Pancreas (tissue), 10 donors: ENCODE measurements at regions of chr2 and their contacts with region 1.

Region 1: GRCh38 chr2:205776139-205776538 is 93.8 kb downstream of the NRP2 start:
- DNase-seq: peak; percentile 65 to 88 (median 80)
- ATAC-seq: peak; percentile 85 to 99 (median 94)
- H3K4me3 ChIP-seq: no peak overlapping the region
- H3K27ac ChIP-seq: no peak overlapping the region
- H3K4me1 ChIP-seq: no peaks in the 10 kb centered on the region
- H3K27me3 ChIP-seq: no peaks in the 10 kb centered on the region
- CTCF ChIP-seq: peak; percentile 77 to 79 (median 78)

Region 2: GRCh38 chr2:205814039-205814364 is 37.9 kb after region 1 on chr2:
- intact Hi-C with region 1: loop called in 1 of 3 experiments (anchors 5 kb)
- DNase-seq: no peak
- ATAC-seq: no peak
- H3K4me3 ChIP-seq: no peak overlapping the region
- H3K27ac ChIP-seq: no peak overlapping the region
- H3K4me1 ChIP-seq: no peaks in the 10 kb centered on the region
- H3K27me3 ChIP-seq: no peaks in the 10 kb centered on the region
- CTCF ChIP-seq: no peak

Region 3: GRCh38 chr2:205868773-205869333 is 92.7 kb after region 1 on chr2:
- intact Hi-C with region 1: no loop called
- DNase-seq: no peak
- ATAC-seq: peak in 2 of 4 donors; percentile 41 to 70
- H3K4me3 ChIP-seq: no peak overlapping the region
- H3K27ac ChIP-seq: no peak overlapping the region
- H3K4me1 ChIP-seq: no peaks in the 10 kb centered on the region
- H3K27me3 ChIP-seq: no peaks in the 10 kb centered on the region
- CTCF ChIP-seq: no peak

Region 4: GRCh38 chr2:205885492-205886099 is 109.5 kb after region 1 on chr2:
- intact Hi-C with region 1: loop called (anchors 5 to 10 kb)
- DNase-seq: peak; percentile 76 to 99 (median 90)
- ATAC-seq: peak; percentile 93 to 100 (median 98)
- H3K4me3 ChIP-seq: no peak overlapping the region
- H3K27ac ChIP-seq: no peak overlapping the region
- H3K4me1 ChIP-seq: no peaks in the 10 kb centered on the region
- H3K27me3 ChIP-seq: no peaks in the 10 kb centered on the region
- CTCF ChIP-seq: peak; percentile 76 to 91 (median 90)

Region 5: GRCh38 chr2:205925373-205926337 is 149.5 kb after region 1 on chr2:
- intact Hi-C with region 1: loop called in 1 of 3 experiments (anchors 10 kb)
- DNase-seq: peak; percentile 52 to 94 (median 78)
- ATAC-seq: peak; percentile 78 to 95 (median 90)
- H3K4me3 ChIP-seq: peak overlapping the region in 1 of 4 donors; percentile 15
- H3K27ac ChIP-seq: no peak overlapping the region
- H3K4me1 ChIP-seq: peaks cover 5 to 14% (median 10%) of the 10 kb centered on the region in 3 donors
- H3K27me3 ChIP-seq: no peaks in the 10 kb centered on the region
- CTCF ChIP-seq: peak; percentile 76 to 82 (median 82)

Region 6: GRCh38 chr2:205947621-205948495 is 171.7 kb after region 1 on chr2:
- intact Hi-C with region 1: loop called in 1 of 3 experiments (anchors 10 kb)
- DNase-seq: peak in 5 of 6 donors; percentile 47 to 82 (median 57)
- ATAC-seq: peak; percentile 88 to 97 (median 92)
- H3K4me3 ChIP-seq: no peak overlapping the region
- H3K27ac ChIP-seq: no peak overlapping the region
- H3K4me1 ChIP-seq: no peaks in the 10 kb centered on the region
- H3K27me3 ChIP-seq: no peaks in the 10 kb centered on the region
- CTCF ChIP-seq: peak; percentile 77 to 87 (median 85)